ENCODE measurements at regions of chr6 and their contacts with region 1.

Region 1: DNA sequence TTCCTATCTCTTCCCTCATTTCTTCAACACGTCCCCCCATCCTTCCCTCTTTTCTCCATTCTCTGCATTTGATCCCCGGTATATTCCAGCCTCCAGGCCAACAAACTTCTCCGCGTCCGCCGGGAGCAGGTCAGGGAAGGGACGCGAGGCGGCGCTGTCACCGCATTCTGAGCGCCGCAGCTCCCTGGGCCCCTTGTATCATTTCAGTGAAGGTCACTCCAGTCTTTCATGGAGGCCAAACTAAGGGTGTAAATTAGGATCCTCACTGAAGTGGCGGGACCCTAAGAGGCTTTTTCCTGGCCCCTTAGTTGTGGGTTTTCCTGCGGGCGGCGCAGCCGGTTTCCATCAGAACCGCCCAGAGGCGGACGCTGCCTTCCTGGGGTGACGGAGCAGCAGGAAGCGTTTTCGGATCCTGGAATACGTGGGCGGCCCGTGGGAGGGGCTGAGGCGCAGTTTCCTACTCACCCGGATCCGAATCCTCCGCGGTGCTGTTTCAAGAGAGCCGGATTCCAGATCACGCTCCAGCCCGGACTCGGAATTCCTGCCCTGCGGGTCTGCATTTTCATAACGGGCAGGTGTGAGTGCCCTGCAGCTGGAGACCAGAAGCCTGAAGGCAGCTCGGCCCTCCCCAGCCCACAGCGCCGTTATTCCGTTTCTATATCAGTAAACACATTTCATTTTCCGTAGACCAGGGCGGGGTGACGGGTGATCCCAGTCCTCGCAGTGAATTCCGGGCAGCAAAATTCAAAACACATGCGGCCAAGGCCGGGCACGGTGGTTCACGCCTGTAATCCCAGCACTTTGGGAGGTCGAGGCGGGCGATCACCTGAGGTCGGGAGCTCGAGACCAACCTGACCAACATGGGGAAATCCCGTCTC is 3.6 kb upstream of the MICA start:
- DNase-seq: peak in 9 of 10 donors; percentile 16 to 70 (median 52)
- ATAC-seq: peak; percentile 19 to 29
- H3K4me3 Mint-ChIP-seq: peak overlapping the region; percentile 85 to 98 (median 94)
- H3K27ac Mint-ChIP-seq: peak overlapping the region; percentile 81 to 98 (median 96)
- H3K4me1 Mint-ChIP-seq: peaks cover 33 to 74% (median 67%) of the 10 kb centered on the region in 4 donors
- H3K27me3 Mint-ChIP-seq: no peaks in the 10 kb centered on the region

Region 2: DNA sequence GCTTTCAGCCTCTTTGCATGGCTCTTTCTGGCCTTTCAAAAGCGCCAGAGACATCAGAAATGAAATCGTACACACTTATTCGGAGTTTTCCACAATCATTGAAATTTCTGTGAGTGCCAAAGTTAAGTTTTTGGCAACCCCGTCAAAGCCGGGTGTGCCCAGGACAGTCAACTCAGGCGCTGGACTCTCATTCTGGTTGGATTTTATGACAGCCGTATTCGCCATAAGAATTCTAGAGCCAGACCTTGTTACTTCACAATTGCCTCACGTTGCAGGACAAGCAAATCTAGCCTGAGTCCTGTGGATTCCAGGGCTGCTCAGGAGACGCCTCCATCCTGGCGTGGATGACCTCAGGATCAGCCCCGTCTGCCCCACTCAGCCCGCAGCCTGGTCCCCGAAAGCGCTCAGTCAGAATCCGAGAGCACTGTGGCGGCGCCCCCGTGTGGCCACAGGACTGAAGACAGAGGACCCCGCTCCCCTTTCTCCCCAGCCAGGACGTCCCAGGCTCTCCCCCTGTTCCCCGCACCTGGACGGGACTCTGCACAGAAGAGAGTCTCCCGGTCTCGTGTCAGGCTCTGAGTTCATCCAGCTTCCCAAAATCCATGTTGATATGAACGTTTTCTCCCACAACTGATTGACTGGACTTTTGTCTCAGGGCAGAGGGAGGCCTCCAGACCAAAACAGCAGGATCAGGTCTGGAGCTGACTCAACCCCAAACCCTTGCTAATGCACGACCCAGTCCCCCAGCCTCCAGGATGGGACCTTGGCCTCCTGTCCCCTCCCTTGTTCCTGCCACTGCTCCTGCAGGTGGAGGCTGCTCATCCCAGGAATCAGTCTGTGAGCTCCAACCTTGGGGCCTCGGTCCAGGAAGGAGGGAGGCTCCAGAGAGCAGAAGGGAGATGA is 41.8 kb after region 1 on chr6:
- POLR2A ChIA-PET with region 1: interaction called, 31 read pairs
- DNase-seq: peak in 9 of 10 donors; percentile 63 to 93 (median 79)
- ATAC-seq: peak; percentile 99 to 100
- H3K4me3 Mint-ChIP-seq: no peak overlapping the region
- H3K27ac Mint-ChIP-seq: peak overlapping the region in 2 of 10 donors; percentile 56 to 66
- H3K4me1 Mint-ChIP-seq: peaks cover 0 to 7% (median 4%) of the 10 kb centered on the region in 4 donors
- H3K27me3 Mint-ChIP-seq: peaks cover 28 to 59% (median 35%) of the 10 kb centered on the region in 5 donors

Measured in naive thymus-derived CD8-positive, alpha-beta T cell (primary cell).